Astrocyte of the cerebellum (primary cell): ENCODE measurements at regions of chr1 and their contacts with region 1.

Region 1: GRCh38 chr1:205275133-205275532 is 46.4 kb downstream of the NUAK2 start:
- DNase-seq: no peak
- H3K4me3 ChIP-seq: no peak overlapping the region
- CTCF ChIP-seq: no peak

Region 2: GRCh38 chr1:205214756-205215155 is 60.4 kb before region 1 on chr1:
- in situ Hi-C with region 1: no loop called
- DNase-seq: no peak
- H3K4me3 ChIP-seq: no peak overlapping the region
- CTCF ChIP-seq: no peak

Region 3: DNA sequence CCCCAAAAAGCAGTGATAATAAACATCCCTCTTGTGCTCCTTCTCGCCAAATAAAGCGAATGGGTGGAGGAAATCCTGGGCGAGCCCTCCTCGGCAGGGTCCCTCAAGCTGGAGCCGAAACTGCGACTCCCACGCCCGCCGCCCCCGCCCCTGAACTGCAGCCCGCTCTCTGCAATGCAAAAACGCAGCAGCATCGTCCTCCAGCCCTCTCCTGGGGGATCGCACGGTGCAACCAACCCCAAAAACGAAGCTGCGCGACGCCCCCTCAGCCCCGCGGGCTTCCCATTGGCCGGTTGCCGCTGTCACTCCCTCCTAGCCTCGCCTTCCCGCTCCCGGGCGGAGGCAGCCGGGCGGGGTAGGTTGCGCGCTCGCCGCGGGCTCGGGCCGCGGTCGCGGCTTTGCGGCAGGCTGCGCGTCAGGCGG is 47.5 kb before region 1 on chr1 and contains the start of gene TMCC2:
- in situ Hi-C with region 1: no loop called
- DNase-seq: no peak
- H3K4me3 ChIP-seq: peak within 1 kb of the TSS; percentile 60
- CTCF ChIP-seq: no peak

Region 4: DNA sequence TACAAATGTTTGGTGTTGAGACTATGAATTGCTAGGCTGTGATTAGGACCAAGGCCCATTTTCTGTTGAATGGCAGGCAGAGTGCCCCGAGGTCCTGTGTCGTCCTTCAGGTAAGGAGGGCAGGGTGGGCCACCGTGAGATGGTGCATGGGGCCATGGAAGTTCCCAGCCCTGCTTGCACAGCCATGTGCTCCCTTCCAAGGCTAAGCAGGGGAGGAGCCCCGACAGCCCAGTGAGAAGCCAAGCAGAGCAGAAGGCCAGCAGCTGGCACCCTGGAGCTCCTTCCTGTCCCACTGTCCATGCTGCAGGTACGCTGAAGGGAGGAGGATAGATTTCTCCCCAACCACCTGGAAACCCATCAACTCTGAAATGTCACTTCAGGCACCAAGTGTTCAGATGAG is 54.6 kb after region 1 on chr1:
- in situ Hi-C with region 1: loop called (anchors 5 kb)
- DNase-seq: no peak
- H3K4me3 ChIP-seq: no peak overlapping the region
- CTCF ChIP-seq: no peak